Lower leg skin (tissue), 4 donors: ENCODE measurements at regions of chr11 and their contacts with region 1.

Region 1: GRCh38 chr11:95764267-95764898 is 25.2 kb downstream of the FAM76B start:
- DNase-seq: no peak
- H3K4me3 ChIP-seq: no peak overlapping the region
- CTCF ChIP-seq: peak in 1 of 3 donors; percentile 37
- POLR2A ChIP-seq: no peak

Region 2: GRCh38 chr11:95577716-95578460 is 186.5 kb before region 1 on chr11:
- intact Hi-C with region 1: loop called (anchors 5 kb)
- DNase-seq: no peak
- H3K4me3 ChIP-seq: no peak overlapping the region
- CTCF ChIP-seq: no peak
- POLR2A ChIP-seq: no peak

Region 3: GRCh38 chr11:95926727-95927126 is 162.3 kb after region 1 on chr11:
- intact Hi-C with region 1: no loop called
- DNase-seq: no peak
- H3K4me3 ChIP-seq: no peak overlapping the region
- CTCF ChIP-seq: no peak
- POLR2A ChIP-seq: no peak